Mammary epithelial cell (primary cell): ENCODE measurements at regions of chr17 and their contacts with region 1.

Region 1: GRCh38 chr17:41665566-41666236 is 23.0 kb upstream of the EIF1 start:
- DNase-seq: peak; percentile 83
- H3K4me3 ChIP-seq: peak overlapping the region in 2 of 3 experiments; percentile 34 to 37
- H3K27ac ChIP-seq: peak overlapping the region; percentile 68
- H3K4me1 ChIP-seq: peaks cover 47% of the 10 kb centered on the region
- H3K27me3 ChIP-seq: no peaks in the 10 kb centered on the region
- CTCF ChIP-seq: peak; percentile 87 to 92

Region 2: GRCh38 chr17:40615295-40615988 is 1050.3 kb before region 1 on chr17:
- CTCF ChIA-PET with region 1: no interaction called
- dilution Hi-C with region 1: no loop called
- in situ Hi-C with region 1: loop called in 1 of 2 experiments (anchors 25 kb)
- intact Hi-C with region 1: loop called (anchors 1 kb)
- DNase-seq: peak; percentile 67
- H3K4me3 ChIP-seq: no peak overlapping the region
- H3K27ac ChIP-seq: no peak overlapping the region
- H3K4me1 ChIP-seq: no peaks in the 10 kb centered on the region
- H3K27me3 ChIP-seq: no peaks in the 10 kb centered on the region
- CTCF ChIP-seq: peak; percentile 59 to 68

Region 3: GRCh38 chr17:40854159-40854814 is 811.4 kb before region 1 on chr17:
- CTCF ChIA-PET with region 1: interaction called, 3 read pairs
- dilution Hi-C with region 1: no loop called
- in situ Hi-C with region 1: no loop called
- intact Hi-C with region 1: loop called (anchors 1 kb)
- DNase-seq: peak; percentile 84
- H3K4me3 ChIP-seq: no peak overlapping the region
- H3K27ac ChIP-seq: no peak overlapping the region
- H3K4me1 ChIP-seq: peaks cover 20% of the 10 kb centered on the region
- H3K27me3 ChIP-seq: no peaks in the 10 kb centered on the region
- CTCF ChIP-seq: no peak

Region 4: DNA sequence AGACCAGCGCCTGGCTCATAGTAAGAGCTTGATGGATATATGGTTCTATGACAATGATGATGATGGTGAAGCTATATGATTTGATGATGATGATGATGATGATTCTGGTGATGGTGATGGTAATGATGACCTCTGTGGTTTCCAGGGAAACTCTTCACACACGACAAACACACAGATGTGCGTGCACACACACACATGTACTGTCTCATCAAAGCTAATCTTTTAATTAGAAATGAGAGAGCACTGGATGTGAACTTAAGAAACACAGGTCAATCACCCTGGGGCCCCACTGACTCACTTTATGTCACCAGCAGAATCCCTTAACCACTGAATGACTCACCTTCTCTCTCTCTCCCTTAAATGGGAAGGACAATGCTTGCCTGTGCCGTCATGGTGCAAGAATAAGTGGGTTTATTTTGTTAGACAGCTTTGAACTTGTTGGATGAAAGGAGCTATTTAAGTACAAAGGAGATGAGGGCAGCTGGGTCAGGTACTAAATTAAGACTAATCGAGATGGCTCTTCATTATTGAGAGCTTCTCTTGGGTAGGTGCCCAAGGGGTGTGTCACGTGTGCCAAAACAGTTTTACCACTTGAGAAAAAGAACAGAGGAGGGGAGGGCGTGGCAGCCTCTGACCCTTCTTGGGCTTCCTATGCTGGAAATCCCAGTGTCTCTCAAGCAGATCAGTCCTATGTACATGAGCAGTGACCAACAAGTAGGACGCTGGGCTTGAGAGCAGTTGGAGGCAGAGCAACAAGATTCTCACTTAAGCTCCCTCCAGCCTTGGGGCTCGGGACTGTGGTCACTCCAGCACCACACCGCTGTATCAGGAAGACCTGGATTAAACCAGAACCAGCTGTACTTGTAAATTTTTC is 261.7 kb before region 1 on chr17:
- CTCF ChIA-PET with region 1: no interaction called
- dilution Hi-C with region 1: no loop called
- in situ Hi-C with region 1: loop called in 1 of 2 experiments (anchors 10 kb)
- intact Hi-C with region 1: loop called (anchors 2 kb)
- DNase-seq: peak; percentile 100
- H3K4me3 ChIP-seq: no peak overlapping the region
- H3K27ac ChIP-seq: peak overlapping the region; percentile 94
- H3K4me1 ChIP-seq: peaks cover 32% of the 10 kb centered on the region
- H3K27me3 ChIP-seq: no peaks in the 10 kb centered on the region
- CTCF ChIP-seq: no peak

Region 5: DNA sequence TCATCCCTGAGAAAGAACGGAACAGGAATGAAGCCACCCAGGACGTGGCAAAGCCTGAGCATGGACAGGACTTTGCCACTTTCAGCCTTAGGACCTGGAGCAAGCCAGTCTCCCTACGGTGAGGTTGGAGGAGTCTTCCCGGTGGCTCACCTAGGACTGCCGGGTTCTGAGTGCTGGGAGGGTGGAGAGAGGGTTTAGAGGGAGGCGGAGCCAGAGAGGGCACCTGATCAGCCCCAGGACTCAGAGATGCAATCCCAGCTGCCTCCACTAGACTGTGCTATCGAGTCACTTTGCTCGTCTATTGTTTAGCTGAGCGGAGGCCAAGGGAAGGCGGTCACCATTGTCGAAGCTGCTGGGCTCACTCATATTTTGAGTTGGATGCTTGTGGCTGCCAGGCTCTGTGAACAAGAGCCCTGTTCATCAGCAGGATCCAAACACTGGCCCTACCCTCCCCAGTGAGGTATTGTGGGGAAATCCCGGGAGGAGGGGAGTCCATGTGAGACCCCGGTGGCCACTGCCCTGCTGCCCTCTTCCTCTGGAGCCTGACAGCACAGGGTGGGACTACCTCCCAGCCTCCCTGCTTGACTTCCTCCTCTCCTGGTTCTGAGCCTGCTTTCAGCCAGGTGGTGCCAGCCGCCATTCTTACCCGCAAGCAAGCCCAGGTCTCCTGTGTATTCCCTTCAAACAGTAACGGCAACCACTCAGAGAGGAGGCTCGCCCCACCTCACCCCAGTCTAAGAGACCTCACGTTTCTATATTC is 86.0 kb before region 1 on chr17:
- CTCF ChIA-PET with region 1: interaction called, 4 read pairs
- dilution Hi-C with region 1: no loop called
- in situ Hi-C with region 1: loop called in 1 of 2 experiments (anchors 10 kb)
- intact Hi-C with region 1: loop called (anchors 1 kb)
- DNase-seq: peak; percentile 98
- H3K4me3 ChIP-seq: no peak overlapping the region
- H3K27ac ChIP-seq: peak overlapping the region; percentile 97
- H3K4me1 ChIP-seq: peaks cover 63% of the 10 kb centered on the region
- H3K27me3 ChIP-seq: no peaks in the 10 kb centered on the region
- CTCF ChIP-seq: peak; percentile 93 to 96

Region 6: GRCh38 chr17:41648411-41649195 is 17.1 kb before region 1 on chr17:
- CTCF ChIA-PET with region 1: interaction called, 44 read pairs
- dilution Hi-C with region 1: no loop called
- in situ Hi-C with region 1: no loop called
- intact Hi-C with region 1: loop called (anchors 1 kb)
- DNase-seq: peak; percentile 76
- H3K4me3 ChIP-seq: no peak overlapping the region
- H3K27ac ChIP-seq: peak overlapping the region; percentile 77
- H3K4me1 ChIP-seq: peaks cover 70% of the 10 kb centered on the region
- H3K27me3 ChIP-seq: no peaks in the 10 kb centered on the region
- CTCF ChIP-seq: peak; percentile 83 to 97